Naive thymus-derived CD8-positive, alpha-beta T cell (primary cell): ENCODE measurements at regions of chr20 and their contacts with region 1.

Region 1: GRCh38 chr20:37020636-37021035 is 69.1 kb upstream of the SAMHD1 start:
- DNase-seq: no peak
- ATAC-seq: no peak
- H3K4me3 Mint-ChIP-seq: no peak overlapping the region
- H3K27ac Mint-ChIP-seq: no peak overlapping the region
- H3K4me1 Mint-ChIP-seq: peaks cover 6 to 24% (median 18%) of the 10 kb centered on the region in 4 donors
- H3K27me3 Mint-ChIP-seq: no peaks in the 10 kb centered on the region

Region 2: GRCh38 chr20:37032077-37032476 is 11.4 kb after region 1 on chr20:
- POLR2A ChIA-PET with region 1: interaction called, 12 read pairs
- DNase-seq: no peak
- ATAC-seq: no peak
- H3K4me3 Mint-ChIP-seq: no peak overlapping the region
- H3K27ac Mint-ChIP-seq: peak overlapping the region in 1 of 10 donors; percentile 11
- H3K4me1 Mint-ChIP-seq: no peaks in the 10 kb centered on the region
- H3K27me3 Mint-ChIP-seq: no peaks in the 10 kb centered on the region